ENCODE measurements at regions of chr11 and their contacts with region 1.

Region 1: GRCh38 chr11:125494974-125495725 is 915 bp downstream of the FEZ1 start:
- DNase-seq: peak; percentile 31
- ATAC-seq: peak; percentile 59
- H3K4me3 ChIP-seq: peak overlapping the region; percentile 94
- H3K27ac ChIP-seq: peak overlapping the region; percentile 83
- H3K4me1 ChIP-seq: peaks cover 5% of the 10 kb centered on the region; the same call in 1 of the 2 replicates
- H3K27me3 ChIP-seq: no peaks in the 10 kb centered on the region
- CTCF ChIP-seq: no peak
- POLR2A ChIP-seq: no peak
- RAD21 ChIP-seq: no peak

Region 2: GRCh38 chr11:125568970-125569914 is 74.1 kb after region 1 on chr11 and contains the start of gene EI24:
- CTCF ChIA-PET with region 1: interaction called, 4 read pairs
- POLR2A ChIA-PET with region 1: no interaction called
- dilution Hi-C with region 1: no loop called
- in situ Hi-C with region 1: no loop called
- intact Hi-C with region 1: loop called (anchors 1 kb)
- DNase-seq: peak; percentile 90
- ATAC-seq: peak; percentile 98
- H3K4me3 ChIP-seq: peak within 1 kb of the TSS; percentile 99
- H3K27ac ChIP-seq: peak within 1 kb of the TSS; percentile 76
- H3K4me1 ChIP-seq: peaks cover 12% of the 10 kb centered on the region
- H3K27me3 ChIP-seq: no peaks in the 10 kb centered on the region; the same call in 1 of the 2 replicates
- CTCF ChIP-seq: peak; percentile 70
- POLR2A ChIP-seq: peak; percentile 71
- RAD21 ChIP-seq: peak; percentile 48
- total RNA-seq, gene EI24: 95.9 and 122 TPM in 2 replicates

Region 3: GRCh38 chr11:125592305-125593112 is 97.4 kb after region 1 on chr11 and contains the start of gene STT3A:
- CTCF ChIA-PET with region 1: no interaction called
- POLR2A ChIA-PET with region 1: no interaction called
- dilution Hi-C with region 1: no loop called
- in situ Hi-C with region 1: no loop called
- intact Hi-C with region 1: loop called (anchors 1 kb)
- DNase-seq: peak; percentile 100
- ATAC-seq: peak; percentile 95
- H3K4me3 ChIP-seq: peak within 1 kb of the TSS; percentile 76
- H3K27ac ChIP-seq: peak within 1 kb of the TSS; percentile 93
- H3K4me1 ChIP-seq: 0 out of 2 replicates have a peak, but pooled peaks cover 2% of the 10 kb centered on the region
- H3K27me3 ChIP-seq: no peaks in the 10 kb centered on the region
- CTCF ChIP-seq: no peak
- POLR2A ChIP-seq: peak; percentile 89
- RAD21 ChIP-seq: no peak
- total RNA-seq, gene STT3A: 346 and 387 TPM in 2 replicates

Measured in IMR-90 (cell line).